Left ventricle myocardium superior (tissue), 1 donor: ENCODE measurements at regions of chr1 and their contacts with region 1.

Region 1: DNA sequence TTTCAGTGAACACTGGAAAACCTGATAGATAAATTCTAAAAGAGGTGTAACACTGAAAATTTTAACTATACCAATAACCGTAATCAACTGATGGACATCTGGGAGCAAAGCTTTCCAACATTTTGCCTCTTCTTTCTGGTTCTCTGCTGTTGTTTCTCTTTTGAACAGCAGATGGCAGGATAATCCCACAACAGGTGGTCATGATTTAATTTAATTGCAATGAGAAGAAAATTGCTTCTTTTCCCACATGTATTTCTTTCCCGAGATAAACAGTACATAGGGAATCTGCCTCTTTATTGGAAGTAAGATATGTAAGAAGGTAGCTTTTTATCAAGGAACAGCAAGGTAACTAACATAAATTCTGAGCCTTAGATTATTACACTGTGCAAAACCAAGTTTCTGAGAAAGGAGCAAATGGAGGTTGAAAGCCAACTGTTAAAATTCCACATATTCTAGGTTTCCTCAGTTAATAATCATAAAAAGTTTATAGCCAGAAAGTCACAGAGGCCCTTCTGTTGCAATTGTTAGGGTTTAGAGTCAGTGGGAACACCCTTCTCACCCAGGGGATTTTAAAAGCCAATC is 72.9 kb downstream of the RPS6KA1 start:
- DNase-seq: no peak
- ATAC-seq: peak; percentile 45

Region 2: GRCh38 chr1:26787706-26788514 is 185.4 kb after region 1 on chr1 and contains the start of gene PIGV:
- intact Hi-C with region 1: loop called (anchors 2 kb)
- DNase-seq: peak; percentile 96
- ATAC-seq: peak; percentile 88
- total RNA-seq, gene PIGV: 4.5 TPM

Region 3: DNA sequence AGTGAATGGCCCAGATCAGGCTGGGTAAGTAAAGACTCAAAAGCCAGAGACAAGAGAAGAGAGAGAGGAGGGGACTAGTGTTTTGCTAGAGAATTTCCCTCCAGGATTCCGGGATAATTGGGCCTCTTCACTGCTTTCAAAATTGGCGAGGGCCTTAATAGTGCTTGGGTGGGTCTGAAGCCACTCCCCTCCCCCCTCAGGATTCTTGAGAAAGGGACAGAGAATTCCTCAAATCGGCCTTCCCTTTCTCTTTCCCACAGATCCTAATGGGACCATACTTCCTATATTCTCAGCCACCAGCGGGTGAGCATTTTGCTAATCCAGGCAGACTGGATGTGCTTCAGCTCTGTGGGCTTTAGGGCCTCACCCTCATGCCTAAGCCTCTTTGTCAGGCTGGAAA is 272.4 kb after region 1 on chr1:
- intact Hi-C with region 1: loop called (anchors 10 kb)
- DNase-seq: no peak
- ATAC-seq: no peak